ENCODE measurements at regions of chr13 and their contacts with region 1.

Region 1: GRCh38 chr13:36999054-36999714 is at the start of gene ALG5:
- ATAC-seq: peak; percentile 50 to 76 (median 72)
- H3K4me3 ChIP-seq: peak within 1 kb of the TSS; percentile 54 to 80 (median 63)
- H3K27ac ChIP-seq: peak within 1 kb of the TSS; percentile 95 to 99
- H3K4me1 ChIP-seq: peaks cover 4 to 9% of the 10 kb centered on the region in 2 donors
- total RNA-seq, gene ALG5: 28.2 to 51.1 (median 40.7) TPM

Region 2: GRCh38 chr13:36131222-36131930 is 867.8 kb before region 1 on chr13 and contains the start of gene DCLK1:
- in situ Hi-C with region 1: no loop called
- ATAC-seq: peak; percentile 84 to 90 (median 88)
- H3K4me3 ChIP-seq: peak within 1 kb of the TSS; percentile 67 to 85 (median 73)
- H3K27ac ChIP-seq: peak within 1 kb of the TSS; percentile 85 to 86
- H3K4me1 ChIP-seq: peaks cover 11 to 21% of the 10 kb centered on the region in 2 donors
- total RNA-seq, gene DCLK1: 25.3 to 117 (median 58.2) TPM

Region 3: DNA sequence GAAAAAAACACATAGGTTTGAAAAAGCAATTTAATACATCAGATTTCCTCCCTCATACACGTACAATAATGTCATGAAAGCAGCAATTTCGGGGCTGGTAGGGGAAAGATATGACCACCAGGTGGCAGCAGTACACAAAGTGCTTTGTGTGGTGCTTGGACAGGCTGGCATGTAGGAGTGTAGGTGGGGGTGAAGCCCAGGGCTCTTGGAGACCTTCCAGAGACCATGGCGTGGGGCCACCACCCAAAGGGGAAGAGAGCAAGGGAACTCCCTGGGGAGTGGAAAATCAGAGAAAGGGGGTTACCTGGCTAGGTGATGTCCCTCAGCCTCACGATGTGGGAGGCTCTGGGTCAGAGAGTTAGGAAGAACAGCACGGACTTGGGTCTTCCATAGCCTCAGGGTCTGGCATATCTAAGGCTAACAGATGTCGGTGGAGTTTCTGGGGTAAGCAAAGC is 578.7 kb before region 1 on chr13:
- in situ Hi-C with region 1: loop called in 4 of 9 experiments (anchors 25 kb)
- ATAC-seq: peak; percentile 82 to 100 (median 93)
- H3K4me3 ChIP-seq: no peak overlapping the region
- H3K27ac ChIP-seq: no peak overlapping the region
- H3K4me1 ChIP-seq: no peaks in the 10 kb centered on the region

Region 4: DNA sequence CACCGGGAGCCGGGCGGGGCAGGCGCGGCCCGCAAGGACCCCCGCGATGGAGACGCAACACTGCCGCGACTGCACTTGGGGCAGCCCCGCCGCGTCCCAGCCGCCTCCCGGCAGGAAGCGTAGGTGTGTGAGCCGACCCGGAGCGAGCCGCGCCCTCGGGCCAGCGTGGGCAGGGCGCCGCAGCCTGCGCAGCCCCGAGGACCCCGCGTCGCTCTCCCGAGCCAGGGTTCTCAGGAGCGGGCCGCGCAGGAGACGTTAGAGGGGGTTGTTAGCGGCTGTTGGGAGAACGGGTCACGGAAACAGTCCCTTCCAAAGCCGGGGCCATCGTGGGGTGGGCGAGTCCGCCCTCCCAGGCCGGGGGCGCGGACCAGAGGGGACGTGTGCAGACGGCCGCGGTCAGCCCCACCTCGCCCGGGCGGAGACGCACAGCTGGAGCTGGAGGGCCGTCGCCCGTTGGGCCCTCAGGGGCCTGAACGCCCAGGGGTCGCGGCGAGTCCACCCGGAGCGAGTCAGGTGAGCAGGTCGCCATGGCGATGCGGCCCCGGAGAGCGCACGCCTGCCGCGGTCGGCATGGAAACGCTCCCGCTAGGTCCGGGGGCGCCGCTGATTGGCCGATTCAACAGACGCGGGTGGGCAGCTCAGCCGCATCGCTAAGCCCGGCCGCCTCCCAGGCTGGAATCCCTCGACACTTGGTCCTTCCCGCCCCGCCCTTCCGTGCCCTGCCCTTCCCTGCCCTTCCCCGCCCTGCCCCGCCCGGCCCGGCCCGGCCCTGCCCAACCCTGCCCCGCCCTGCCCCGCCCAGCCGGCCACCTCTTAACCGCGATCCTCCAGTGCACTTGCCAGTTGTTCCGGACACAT is 567.3 kb before region 1 on chr13 and contains the start of gene CCNA1:
- in situ Hi-C with region 1: loop called in 2 of 9 experiments (anchors 25 kb)
- ATAC-seq: peak; percentile 46 to 97 (median 94)
- H3K4me3 ChIP-seq: peak within 1 kb of the TSS; percentile 55 to 78 (median 62)
- H3K27ac ChIP-seq: peak within 1 kb of the TSS in 1 of 2 donors; percentile 7
- H3K4me1 ChIP-seq: peaks cover 0 to 7% of the 10 kb centered on the region in 2 donors
- total RNA-seq, gene CCNA1: 2.8 to 13.3 (median 5.2) TPM in 5 of 8 experiments, not detected in the others

Region 5: DNA sequence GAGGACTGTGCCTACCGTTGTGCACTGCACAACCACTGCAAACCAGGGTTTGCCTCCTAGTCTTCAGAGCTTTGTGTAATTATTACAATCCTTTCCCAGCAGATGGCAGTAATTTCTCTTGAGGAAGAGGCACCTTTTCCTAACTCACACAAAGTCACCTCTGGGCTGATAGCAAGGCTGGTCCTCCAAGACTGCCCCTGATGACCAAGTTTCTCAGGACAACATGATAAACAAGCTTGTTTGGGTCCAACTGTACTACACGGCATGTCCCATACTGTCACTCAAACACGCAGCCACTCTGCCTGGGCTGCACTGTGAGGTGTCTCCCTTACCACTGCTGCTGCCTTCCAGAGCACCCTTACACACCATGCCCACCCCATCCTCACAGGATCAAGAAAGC is 140.9 kb before region 1 on chr13:
- in situ Hi-C with region 1: loop called in 2 of 9 experiments (anchors 25 kb)
- ATAC-seq: peak in 6 of 8 experiments; percentile 44 to 90 (median 60)
- H3K4me3 ChIP-seq: no peak overlapping the region
- H3K27ac ChIP-seq: no peak overlapping the region
- H3K4me1 ChIP-seq: no peaks in the 10 kb centered on the region

Region 6: DNA sequence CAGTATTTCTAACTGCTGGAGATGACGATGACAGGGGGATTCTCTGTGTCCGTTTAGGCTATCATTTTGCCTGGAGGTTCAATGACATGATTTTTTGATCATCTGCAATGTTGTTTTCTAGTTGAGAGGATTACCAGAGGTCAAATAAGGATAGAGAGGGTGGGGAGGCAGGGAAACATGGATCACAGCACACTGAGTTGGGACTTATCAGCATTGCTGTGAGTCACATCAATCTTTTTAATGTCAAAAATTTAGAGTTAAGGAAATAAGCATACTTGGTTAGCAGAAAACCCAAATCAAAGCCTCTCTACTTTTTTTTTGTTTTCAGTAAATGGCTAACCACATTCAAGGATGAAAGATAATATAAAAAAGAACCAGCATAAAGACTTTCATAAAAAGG is 149.3 kb after region 1 on chr13:
- in situ Hi-C with region 1: no loop called
- ATAC-seq: no peak
- H3K4me3 ChIP-seq: no peak overlapping the region
- H3K27ac ChIP-seq: no peak overlapping the region
- H3K4me1 ChIP-seq: no peaks in the 10 kb centered on the region

Measured in motor neuron (in vitro differentiated cells).